GM12878 (cell line): ENCODE measurements at regions of chr9 and their contacts with region 1.

Region 1: GRCh38 chr9:99590840-99591239 is 230.8 kb upstream of the NR4A3 start:
- DNase-seq: no peak
- ATAC-seq: peak; percentile 22
- H3K4me3 ChIP-seq: no peak overlapping the region
- H3K27ac ChIP-seq: no peak overlapping the region
- H3K4me1 ChIP-seq: peaks cover 13% of the 10 kb centered on the region; the same call in 1 of the 2 replicates
- H3K27me3 ChIP-seq: no peaks in the 10 kb centered on the region
- CTCF ChIP-seq: no peak
- EP300 ChIP-seq: peak in 1 of 2 experiments; percentile 25; a peak in 1 of 4 replicates
- POLR2A ChIP-seq: no peak
- RAD21 ChIP-seq: no peak

Region 2: GRCh38 chr9:99513441-99514112 is 77.3 kb before region 1 on chr9:
- CTCF ChIA-PET with region 1: interaction called, 7 read pairs
- POLR2A ChIA-PET with region 1: interaction called, 7 read pairs
- RAD21 ChIA-PET with region 1: interaction called, 17 read pairs
- SMC1A ChIA-PET with region 1: interaction called, 9 read pairs
- in situ Hi-C with region 1: no loop called
- intact Hi-C with region 1: loop called (anchors 5 kb)
- DNase-seq: peak; percentile 59
- ATAC-seq: peak; percentile 88
- H3K4me3 ChIP-seq: no peak overlapping the region
- H3K27ac ChIP-seq: peak overlapping the region; percentile 42; the same call in 1 of the 2 replicates
- H3K4me1 ChIP-seq: peaks cover 34% of the 10 kb centered on the region
- H3K27me3 ChIP-seq: no peaks in the 10 kb centered on the region
- CTCF ChIP-seq: no peak
- EP300 ChIP-seq: peak; percentile 85 to 95
- POLR2A ChIP-seq: no peak
- RAD21 ChIP-seq: no peak

Region 3: DNA sequence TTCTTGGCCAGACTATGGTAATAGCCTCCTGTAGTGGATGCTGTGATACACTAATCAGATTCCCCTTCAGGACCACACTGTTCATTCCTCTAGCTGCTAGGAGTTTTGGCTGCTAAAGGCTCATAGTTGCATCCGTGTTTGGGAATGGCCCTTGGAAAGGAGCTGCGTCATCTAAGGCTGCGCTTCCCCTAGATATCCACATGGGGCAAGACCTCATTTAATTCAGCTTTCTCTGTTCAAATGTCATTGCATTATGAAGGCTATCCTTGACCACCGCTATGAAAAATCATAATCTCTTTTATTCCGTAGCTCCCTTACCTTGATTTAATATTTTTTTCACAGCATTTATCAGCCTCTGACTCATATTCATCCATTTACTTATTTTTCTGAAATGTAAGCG is 27.5 kb before region 1 on chr9:
- CTCF ChIA-PET with region 1: no interaction called
- POLR2A ChIA-PET with region 1: interaction called, 3 read pairs
- RAD21 ChIA-PET with region 1: no interaction called
- SMC1A ChIA-PET with region 1: interaction called, 13 read pairs
- in situ Hi-C with region 1: no loop called
- intact Hi-C with region 1: no loop called
- DNase-seq: no peak
- ATAC-seq: no peak
- H3K4me3 ChIP-seq: no peak overlapping the region
- H3K27ac ChIP-seq: no peak overlapping the region
- H3K4me1 ChIP-seq: no peaks in the 10 kb centered on the region
- H3K27me3 ChIP-seq: no peaks in the 10 kb centered on the region
- CTCF ChIP-seq: no peak
- EP300 ChIP-seq: no peak
- POLR2A ChIP-seq: no peak
- RAD21 ChIP-seq: no peak

Region 4: DNA sequence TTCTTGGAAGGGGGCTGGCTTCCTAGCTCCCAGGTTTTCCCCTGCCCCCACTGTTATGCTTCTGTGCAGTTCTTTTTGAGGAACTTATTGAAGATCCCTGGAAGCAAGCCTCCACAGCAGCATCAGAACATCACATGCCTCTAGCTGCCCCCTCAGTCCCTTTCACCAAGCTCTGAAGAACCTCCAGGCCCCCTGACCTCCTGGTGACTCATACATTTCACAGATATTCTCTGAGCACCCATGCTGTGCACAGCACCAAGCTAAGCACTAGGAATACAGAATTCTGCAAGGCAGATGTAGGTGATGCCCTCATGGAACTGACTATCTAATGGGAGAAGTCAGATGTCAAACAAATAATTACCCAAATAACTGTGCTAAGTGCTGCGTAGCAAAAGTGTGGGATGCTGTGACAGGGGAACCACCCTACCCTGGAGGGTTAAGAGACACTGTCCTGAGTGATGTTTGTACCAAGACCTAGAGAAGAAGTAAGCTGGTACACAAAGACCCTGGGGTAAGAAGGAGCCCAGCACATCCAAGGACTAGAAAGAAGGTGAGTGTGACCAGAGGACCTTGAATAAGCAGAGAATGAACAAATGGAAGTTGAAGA is 17.1 kb after region 1 on chr9:
- CTCF ChIA-PET with region 1: interaction called, 3 read pairs
- POLR2A ChIA-PET with region 1: no interaction called
- RAD21 ChIA-PET with region 1: interaction called, 6 read pairs
- SMC1A ChIA-PET with region 1: interaction called, 10 read pairs
- in situ Hi-C with region 1: no loop called
- intact Hi-C with region 1: no loop called
- DNase-seq: no peak
- ATAC-seq: no peak
- H3K4me3 ChIP-seq: no peak overlapping the region
- H3K27ac ChIP-seq: no peak overlapping the region
- H3K4me1 ChIP-seq: no peaks in the 10 kb centered on the region
- H3K27me3 ChIP-seq: no peaks in the 10 kb centered on the region
- CTCF ChIP-seq: no peak
- EP300 ChIP-seq: no peak
- POLR2A ChIP-seq: no peak
- RAD21 ChIP-seq: no peak

Region 5: GRCh38 chr9:99633265-99633664 is 42.4 kb after region 1 on chr9:
- CTCF ChIA-PET with region 1: interaction called, 4 read pairs
- POLR2A ChIA-PET with region 1: interaction called, 3 read pairs
- RAD21 ChIA-PET with region 1: interaction called, 3 read pairs
- SMC1A ChIA-PET with region 1: interaction called, 9 read pairs
- in situ Hi-C with region 1: no loop called
- intact Hi-C with region 1: loop called (anchors 2 kb)
- DNase-seq: no peak
- ATAC-seq: peak; percentile 80
- H3K4me3 ChIP-seq: no peak overlapping the region
- H3K27ac ChIP-seq: no peak overlapping the region
- H3K4me1 ChIP-seq: peaks cover 7% of the 10 kb centered on the region
- H3K27me3 ChIP-seq: no peaks in the 10 kb centered on the region
- CTCF ChIP-seq: no peak
- EP300 ChIP-seq: no peak
- POLR2A ChIP-seq: no peak
- RAD21 ChIP-seq: no peak

Region 6: GRCh38 chr9:99720455-99721050 is 129.7 kb after region 1 on chr9:
- CTCF ChIA-PET with region 1: no interaction called
- POLR2A ChIA-PET with region 1: no interaction called
- RAD21 ChIA-PET with region 1: interaction called, 3 read pairs
- SMC1A ChIA-PET with region 1: interaction called, 8 read pairs
- in situ Hi-C with region 1: no loop called
- intact Hi-C with region 1: loop called (anchors 5 kb)
- DNase-seq: peak; percentile 55
- ATAC-seq: peak; percentile 96
- H3K4me3 ChIP-seq: peak overlapping the region; percentile 51; the same call in 1 of the 2 replicates
- H3K27ac ChIP-seq: peak overlapping the region; percentile 65
- H3K4me1 ChIP-seq: peaks cover 8% of the 10 kb centered on the region; the same call in 1 of the 2 replicates
- H3K27me3 ChIP-seq: no peaks in the 10 kb centered on the region
- CTCF ChIP-seq: no peak
- EP300 ChIP-seq: no peak; a peak in 1 of 4 replicates
- POLR2A ChIP-seq: no peak
- RAD21 ChIP-seq: no peak